Right cardiac atrium (tissue), 5 donors: ENCODE measurements at regions of chr9 and their contacts with region 1.

Region 1: DNA sequence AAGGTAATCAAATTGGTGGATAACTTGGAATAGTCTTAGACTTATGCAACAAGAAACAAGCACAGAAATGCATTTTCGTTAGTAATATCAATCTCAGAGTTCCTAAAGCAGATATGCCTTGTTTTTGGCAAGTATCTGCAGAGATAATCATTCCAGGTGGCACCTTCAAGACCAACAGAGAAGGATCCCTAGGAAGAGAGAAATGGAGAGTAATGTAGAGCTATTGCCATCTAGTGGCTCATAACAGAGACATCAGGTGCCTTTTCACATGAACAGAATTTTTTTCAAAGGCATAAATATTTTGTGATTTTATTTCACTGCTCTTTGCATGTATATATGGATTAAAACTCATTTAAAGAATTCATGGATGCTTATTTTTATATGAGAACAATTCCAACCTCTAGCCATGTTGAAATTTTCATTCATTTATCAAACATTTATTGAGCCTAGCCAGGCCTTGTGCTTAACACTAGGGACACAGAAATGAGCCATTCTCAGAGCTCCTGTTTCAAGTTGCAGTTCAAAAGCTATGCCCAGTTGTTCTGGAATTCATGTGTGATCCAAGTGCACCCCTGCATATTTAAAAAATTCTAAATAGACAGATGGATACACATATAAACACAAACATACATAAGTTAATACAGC is 117.5 kb upstream of the OR13F1 start:
- DNase-seq: no peak
- ATAC-seq: no peak
- H3K4me3 ChIP-seq: no peak overlapping the region
- H3K27ac ChIP-seq: no peak overlapping the region
- H3K4me1 ChIP-seq: peaks cover 3% of the 10 kb centered on the region
- H3K27me3 ChIP-seq: no peaks in the 10 kb centered on the region

Region 2: GRCh38 chr9:104027295-104027694 is 359.3 kb before region 1 on chr9:
- intact Hi-C with region 1: loop called in 1 of 4 experiments (anchors 5 kb)
- DNase-seq: no peak
- ATAC-seq: no peak
- H3K4me3 ChIP-seq: no peak overlapping the region
- H3K27ac ChIP-seq: no peak overlapping the region
- H3K4me1 ChIP-seq: no peaks in the 10 kb centered on the region
- H3K27me3 ChIP-seq: no peaks in the 10 kb centered on the region

Region 3: DNA sequence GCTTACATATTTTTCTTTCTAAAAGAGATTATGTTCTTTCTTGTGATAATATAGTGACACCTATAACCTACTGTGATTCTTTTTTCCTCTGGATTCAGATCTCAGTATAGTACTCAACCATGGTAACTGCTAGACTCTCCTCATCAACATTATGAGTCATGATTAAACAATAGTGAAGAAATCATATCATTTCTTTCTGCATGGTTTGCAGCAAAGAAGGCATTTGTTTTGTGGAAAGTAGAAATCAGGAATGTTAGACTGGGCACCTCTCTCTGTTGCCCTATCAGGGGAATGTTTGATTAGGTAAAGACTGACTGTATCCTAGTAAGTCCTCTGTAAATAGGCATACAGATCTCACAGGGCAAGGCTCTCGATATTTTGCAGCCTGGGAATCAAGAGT is 318.0 kb before region 1 on chr9:
- intact Hi-C with region 1: no loop called
- DNase-seq: no peak
- ATAC-seq: no peak
- H3K4me3 ChIP-seq: no peak overlapping the region
- H3K27ac ChIP-seq: no peak overlapping the region
- H3K4me1 ChIP-seq: no peaks in the 10 kb centered on the region
- H3K27me3 ChIP-seq: no peaks in the 10 kb centered on the region

Region 4: DNA sequence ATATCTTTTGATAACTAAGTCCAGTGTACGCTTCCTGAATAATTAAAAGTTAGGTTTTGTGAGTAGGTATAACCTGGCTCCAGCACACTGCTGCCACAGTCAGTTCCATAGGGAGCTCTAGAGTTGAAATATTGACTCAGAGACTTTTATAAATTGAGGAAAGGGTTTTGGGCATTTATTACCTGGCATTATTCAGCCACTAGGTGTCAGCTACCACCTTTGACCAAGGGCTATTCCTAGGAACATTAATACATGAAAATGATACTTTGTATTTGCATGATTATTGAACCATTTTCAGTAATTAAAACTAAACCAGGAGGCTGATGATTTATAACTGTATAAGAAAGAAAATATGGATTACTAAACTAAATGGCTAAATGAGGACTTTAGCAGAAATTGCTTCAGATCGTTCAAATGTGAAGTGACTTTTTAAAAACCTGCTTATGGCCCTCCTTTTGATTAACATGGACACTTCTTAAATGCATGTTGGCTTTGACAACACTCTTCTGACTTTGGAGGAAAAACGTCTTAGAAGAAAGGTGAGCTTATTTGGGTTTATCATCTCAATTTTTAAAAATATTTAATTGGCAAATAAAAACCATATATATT is 209.4 kb before region 1 on chr9:
- intact Hi-C with region 1: loop called in 2 of 4 experiments (anchors 10 kb)
- DNase-seq: no peak
- ATAC-seq: no peak
- H3K4me3 ChIP-seq: no peak overlapping the region
- H3K27ac ChIP-seq: no peak overlapping the region
- H3K4me1 ChIP-seq: no peaks in the 10 kb centered on the region
- H3K27me3 ChIP-seq: no peaks in the 10 kb centered on the region

Region 5: DNA sequence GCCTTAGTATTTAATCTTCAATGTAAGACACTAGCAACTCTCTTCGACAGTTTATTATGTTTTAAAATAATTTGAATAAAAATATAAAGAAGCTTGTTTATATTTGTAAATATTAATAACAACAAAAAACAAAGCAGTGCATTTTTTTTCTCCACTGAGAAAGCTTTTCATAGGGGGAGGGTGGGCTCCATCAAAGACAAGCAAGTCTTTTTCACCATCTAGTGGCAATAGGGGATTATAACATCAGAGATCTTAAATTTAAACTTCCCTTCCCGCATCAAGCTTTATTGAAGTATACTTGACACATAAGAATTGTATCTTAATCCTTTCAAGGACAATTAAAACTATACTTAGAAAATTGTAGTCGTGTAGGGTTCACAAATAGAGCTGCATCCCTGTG is 108.3 kb after region 1 on chr9:
- intact Hi-C with region 1: no loop called
- DNase-seq: no peak
- ATAC-seq: no peak
- H3K4me3 ChIP-seq: no peak overlapping the region
- H3K27ac ChIP-seq: no peak overlapping the region
- H3K4me1 ChIP-seq: no peaks in the 10 kb centered on the region
- H3K27me3 ChIP-seq: no peaks in the 10 kb centered on the region

Region 6: DNA sequence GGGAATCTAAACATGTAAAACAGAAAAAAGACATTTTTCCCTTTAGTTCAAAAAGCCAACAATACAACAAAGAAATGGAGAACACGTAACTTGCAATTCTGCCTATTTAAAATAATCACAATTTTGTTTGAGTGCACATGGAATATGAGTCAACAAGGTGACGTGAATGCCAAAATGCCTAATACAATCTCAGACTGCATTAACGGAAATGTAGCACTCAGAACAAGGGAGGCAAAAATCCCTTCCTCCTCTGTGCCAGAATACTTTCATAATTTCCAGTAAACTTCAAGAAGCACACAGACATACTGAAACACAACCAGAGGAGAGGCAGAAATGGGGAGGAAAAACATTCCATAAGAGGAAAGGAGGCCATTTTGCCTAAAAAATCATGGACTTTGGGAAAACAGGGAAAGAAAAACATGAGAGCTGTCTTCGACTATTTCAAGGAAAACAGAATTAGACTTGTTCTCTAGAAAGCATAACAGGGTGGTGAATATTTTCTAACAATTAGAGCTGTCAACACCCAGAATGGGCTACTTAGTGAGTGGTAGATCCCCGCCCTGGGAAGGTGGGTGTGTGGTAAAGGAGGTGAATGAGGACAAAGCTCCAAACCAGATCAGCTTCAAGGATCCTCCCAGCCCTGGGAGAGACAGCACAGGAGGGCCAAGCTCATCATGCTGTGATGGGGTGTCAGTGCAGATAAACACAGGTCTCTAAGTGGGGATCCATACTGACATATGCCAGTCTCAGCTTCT is 493.2 kb after region 1 on chr9:
- intact Hi-C with region 1: no loop called
- DNase-seq: no peak
- ATAC-seq: peak; percentile 72 to 77
- H3K4me3 ChIP-seq: no peak overlapping the region
- H3K27ac ChIP-seq: peak overlapping the region; percentile 75
- H3K4me1 ChIP-seq: no peaks in the 10 kb centered on the region
- H3K27me3 ChIP-seq: no peaks in the 10 kb centered on the region